IMR-90 (cell line): ENCODE measurements at regions of chr10 and their contacts with region 1.

Region 1: GRCh38 chr10:128069351-128070051 is 56.7 kb downstream of the MKI67 start:
- DNase-seq: peak; percentile 66
- ATAC-seq: peak; percentile 89
- H3K4me3 ChIP-seq: no peak overlapping the region
- H3K27ac ChIP-seq: no peak overlapping the region
- H3K4me1 ChIP-seq: peaks cover 3% of the 10 kb centered on the region
- H3K27me3 ChIP-seq: no peaks in the 10 kb centered on the region; the same call in 1 of the 2 replicates
- CTCF ChIP-seq: peak; percentile 89
- POLR2A ChIP-seq: no peak
- RAD21 ChIP-seq: peak; percentile 81

Region 2: GRCh38 chr10:127863231-127863825 is 206.2 kb before region 1 on chr10:
- CTCF ChIA-PET with region 1: no interaction called
- POLR2A ChIA-PET with region 1: no interaction called
- dilution Hi-C with region 1: no loop called
- in situ Hi-C with region 1: no loop called
- intact Hi-C with region 1: no loop called
- DNase-seq: peak; percentile 6
- ATAC-seq: no peak
- H3K4me3 ChIP-seq: no peak overlapping the region
- H3K27ac ChIP-seq: no peak overlapping the region
- H3K4me1 ChIP-seq: no peaks in the 10 kb centered on the region
- H3K27me3 ChIP-seq: no peaks in the 10 kb centered on the region
- CTCF ChIP-seq: no peak
- POLR2A ChIP-seq: no peak
- RAD21 ChIP-seq: no peak

Region 3: DNA sequence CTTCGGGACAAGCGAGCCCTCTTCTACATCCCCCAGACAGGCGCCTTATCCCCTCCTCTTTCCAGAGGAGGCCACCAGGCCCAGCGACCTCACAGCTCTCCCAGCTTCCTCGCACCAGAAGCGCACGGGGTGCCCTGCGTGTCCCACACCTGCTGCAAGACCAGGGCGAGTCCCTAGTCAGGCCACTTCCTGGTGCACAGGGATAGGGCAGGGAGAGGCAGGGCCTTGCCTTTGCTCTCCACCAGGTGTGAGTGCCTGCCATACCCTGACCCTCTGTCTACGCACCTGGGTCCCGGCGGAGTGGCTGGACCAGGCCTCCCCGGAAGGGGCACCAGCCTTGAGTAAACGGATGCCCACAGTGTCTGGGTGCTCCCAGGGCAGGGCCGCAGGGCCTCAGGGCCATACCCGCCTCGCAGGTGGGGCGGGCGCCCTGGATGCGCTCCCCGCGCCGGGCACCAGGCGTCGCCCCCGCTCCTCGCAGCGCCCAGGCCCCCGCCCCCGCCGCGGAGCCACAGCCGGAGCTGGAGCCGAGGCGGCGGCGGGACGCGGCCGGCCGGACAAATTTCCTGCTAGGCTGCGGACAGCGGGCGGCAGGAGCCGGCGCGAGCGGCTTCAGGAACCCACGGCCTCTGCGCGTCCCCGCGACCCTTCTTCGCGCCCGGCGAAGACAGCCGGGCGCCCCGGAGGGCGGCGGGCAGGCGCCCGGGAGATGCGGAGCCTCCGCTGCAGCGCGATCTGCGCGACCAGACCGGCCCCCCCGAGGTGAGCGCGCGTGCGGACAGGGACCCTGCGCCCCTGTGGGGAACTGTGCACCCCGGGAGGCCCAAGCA is 162.7 kb before region 1 on chr10 and contains the start of gene PTPRE:
- CTCF ChIA-PET with region 1: interaction called, 3 read pairs
- POLR2A ChIA-PET with region 1: no interaction called
- dilution Hi-C with region 1: no loop called
- in situ Hi-C with region 1: no loop called
- intact Hi-C with region 1: loop called (anchors 1 kb)
- DNase-seq: peak; percentile 24
- ATAC-seq: peak; percentile 94
- H3K4me3 ChIP-seq: peak within 1 kb of the TSS; percentile 42
- H3K27ac ChIP-seq: no peak within 1 kb of the TSS
- H3K4me1 ChIP-seq: peaks cover 4% of the 10 kb centered on the region; the same call in 1 of the 2 replicates
- H3K27me3 ChIP-seq: peaks cover 3% of the 10 kb centered on the region; the same call in 1 of the 2 replicates
- CTCF ChIP-seq: peak; percentile 70
- POLR2A ChIP-seq: no peak
- RAD21 ChIP-seq: peak; percentile 76
- total RNA-seq, gene PTPRE: 0.54 and 0.56 TPM in 2 replicates

Region 4: DNA sequence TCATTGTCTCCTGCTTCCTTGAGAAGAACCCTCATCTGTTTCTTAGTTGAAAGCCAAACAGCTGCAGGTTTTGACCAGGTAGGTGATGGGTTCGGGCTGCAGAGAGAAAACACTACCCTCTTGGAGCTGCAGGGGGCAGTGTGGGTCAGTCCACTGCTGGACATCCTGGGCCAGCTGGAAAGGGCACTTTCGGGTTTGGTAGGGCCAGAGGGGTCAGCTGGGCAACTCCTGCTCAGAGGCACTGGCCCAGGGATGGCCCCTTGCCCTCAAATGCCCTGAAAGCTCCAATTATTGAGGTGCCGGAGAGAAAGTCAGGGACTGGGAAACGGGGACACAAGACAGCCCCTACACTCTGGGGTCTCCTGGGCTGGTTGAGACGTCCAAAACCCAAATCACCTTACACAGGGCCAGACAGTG is 33.9 kb before region 1 on chr10:
- CTCF ChIA-PET with region 1: interaction called, 17 read pairs
- POLR2A ChIA-PET with region 1: no interaction called
- dilution Hi-C with region 1: no loop called
- in situ Hi-C with region 1: no loop called
- intact Hi-C with region 1: loop called (anchors 1 kb)
- DNase-seq: no peak
- ATAC-seq: peak; percentile 70
- H3K4me3 ChIP-seq: no peak overlapping the region
- H3K27ac ChIP-seq: no peak overlapping the region
- H3K4me1 ChIP-seq: peaks cover 2% of the 10 kb centered on the region
- H3K27me3 ChIP-seq: no peaks in the 10 kb centered on the region; the same call in 1 of the 2 replicates
- CTCF ChIP-seq: peak; percentile 56
- POLR2A ChIP-seq: no peak
- RAD21 ChIP-seq: peak; percentile 40

Region 5: GRCh38 chr10:128125944-128126764 is 56.7 kb after region 1 on chr10 and contains the start of gene MKI67:
- CTCF ChIA-PET with region 1: no interaction called
- POLR2A ChIA-PET with region 1: no interaction called
- dilution Hi-C with region 1: no loop called
- in situ Hi-C with region 1: no loop called
- intact Hi-C with region 1: no loop called
- DNase-seq: peak; percentile 83
- ATAC-seq: peak; percentile 91
- H3K4me3 ChIP-seq: peak within 1 kb of the TSS; percentile 87
- H3K27ac ChIP-seq: peak within 1 kb of the TSS; percentile 26; the same call in 1 of the 2 replicates
- H3K4me1 ChIP-seq: peaks cover 6% of the 10 kb centered on the region; the same call in 1 of the 2 replicates
- H3K27me3 ChIP-seq: no peaks in the 10 kb centered on the region
- CTCF ChIP-seq: no peak
- POLR2A ChIP-seq: no peak
- RAD21 ChIP-seq: no peak
- total RNA-seq, gene MKI67: 36.4 and 39.2 TPM in 2 replicates